ENCODE measurements at regions of chr9 and their contacts with region 1.

Region 1: GRCh38 chr9:35732122-35732799 is at the starts of genes CREB3 and TLN1:
- DNase-seq: peak; percentile 87 to 98 (median 95)
- ATAC-seq: peak; percentile 91 to 93
- H3K4me3 Mint-ChIP-seq: peak within 1 kb of the TSS in 5 of 10 donors; percentile 94 to 98 (median 95)
- H3K27ac Mint-ChIP-seq: peak within 1 kb of the TSS in 8 of 10 donors; percentile 83 to 97 (median 95)
- H3K4me1 Mint-ChIP-seq: peaks cover 19 to 30% (median 24%) of the 10 kb centered on the region in 4 donors
- H3K27me3 Mint-ChIP-seq: no peaks in the 10 kb centered on the region
- polyA plus RNA-seq, gene CREB3: 29.8 to 40.3 (median 33.1) TPM
- polyA plus RNA-seq, gene TLN1: 32.9 to 88.9 (median 36.4) TPM

Region 2: DNA sequence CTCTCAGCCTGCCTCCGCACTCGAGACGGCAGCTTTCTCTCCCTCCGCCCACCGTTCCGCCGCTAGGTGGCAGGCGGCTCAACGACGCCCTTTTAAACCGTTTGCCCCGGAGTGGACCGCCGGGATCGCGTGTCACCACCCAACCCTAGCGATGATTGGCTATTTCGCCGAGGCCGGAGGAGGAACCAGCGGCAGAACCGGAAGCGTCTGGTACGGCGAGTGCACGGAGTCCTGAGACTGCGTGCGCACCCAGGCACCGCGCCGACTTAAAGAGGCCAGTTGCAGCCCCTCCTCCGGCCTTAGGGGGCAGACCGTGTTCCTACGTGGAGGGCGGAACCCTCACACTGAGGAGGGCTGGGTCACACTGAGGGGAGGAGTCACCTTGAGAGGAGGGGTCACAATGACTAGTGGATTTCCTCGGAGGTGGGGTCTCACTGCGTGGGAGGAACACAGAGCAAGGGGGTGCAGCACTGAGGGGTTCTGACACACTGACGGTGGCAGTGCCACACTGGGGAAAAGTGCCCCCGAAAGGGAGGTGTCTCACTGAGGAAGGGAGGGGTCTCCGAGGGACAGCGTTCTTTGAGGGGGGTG is 128.2 kb before region 1 on chr9:
- POLR2A ChIA-PET with region 1: interaction called, 21 read pairs
- DNase-seq: peak; percentile 94 to 100 (median 99)
- ATAC-seq: peak; percentile 83 to 87
- H3K4me3 Mint-ChIP-seq: peak overlapping the region; percentile 92 to 99 (median 96)
- H3K27ac Mint-ChIP-seq: peak overlapping the region; percentile 93 to 99 (median 98)
- H3K4me1 Mint-ChIP-seq: peaks cover 26 to 40% (median 34%) of the 10 kb centered on the region in 4 donors
- H3K27me3 Mint-ChIP-seq: no peaks in the 10 kb centered on the region

Region 3: DNA sequence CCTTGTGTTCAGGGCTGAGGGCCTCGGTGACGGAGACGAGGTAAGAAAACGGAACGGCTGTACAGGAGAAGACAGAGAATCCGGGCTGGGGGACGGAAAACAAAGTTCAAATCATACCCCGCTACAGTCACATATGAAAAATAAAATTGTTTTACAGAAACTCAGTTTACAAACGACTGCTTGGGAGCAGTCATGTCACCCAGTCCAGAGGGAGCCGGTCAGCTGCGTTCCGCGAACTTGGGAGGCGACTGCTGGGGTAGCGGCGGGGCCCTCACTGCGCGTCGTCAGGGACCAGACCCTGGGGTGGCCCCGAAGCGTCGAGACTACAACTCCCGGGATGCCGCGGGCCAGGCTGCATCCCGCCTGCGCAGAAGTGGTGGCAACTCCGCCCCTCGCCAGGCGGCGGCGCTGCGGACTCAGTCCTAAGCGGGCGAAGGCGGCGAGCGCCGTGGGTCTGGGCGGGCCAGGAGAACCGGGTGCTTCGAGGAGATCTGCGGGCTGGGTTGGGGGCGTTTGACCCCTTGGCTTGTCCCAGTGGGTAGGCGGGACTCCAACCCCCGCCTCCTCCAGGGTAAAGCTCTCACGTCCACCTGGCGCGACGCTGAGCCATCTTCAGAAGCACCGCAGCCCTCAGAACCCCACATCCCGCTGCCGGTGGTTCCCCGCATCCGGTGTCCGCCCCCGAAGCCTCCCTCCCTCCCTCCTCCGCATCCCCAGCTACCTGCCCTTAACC is 85.6 kb before region 1 on chr9:
- POLR2A ChIA-PET with region 1: interaction called, 36 read pairs
- DNase-seq: peak; percentile 83 to 96 (median 92)
- ATAC-seq: peak; percentile 81 to 83
- H3K4me3 Mint-ChIP-seq: peak overlapping the region; percentile 89 to 98 (median 96)
- H3K27ac Mint-ChIP-seq: peak overlapping the region; percentile 95 to 98 (median 96)
- H3K4me1 Mint-ChIP-seq: peaks cover 32 to 85% (median 55%) of the 10 kb centered on the region in 4 donors
- H3K27me3 Mint-ChIP-seq: no peaks in the 10 kb centered on the region

Region 4: DNA sequence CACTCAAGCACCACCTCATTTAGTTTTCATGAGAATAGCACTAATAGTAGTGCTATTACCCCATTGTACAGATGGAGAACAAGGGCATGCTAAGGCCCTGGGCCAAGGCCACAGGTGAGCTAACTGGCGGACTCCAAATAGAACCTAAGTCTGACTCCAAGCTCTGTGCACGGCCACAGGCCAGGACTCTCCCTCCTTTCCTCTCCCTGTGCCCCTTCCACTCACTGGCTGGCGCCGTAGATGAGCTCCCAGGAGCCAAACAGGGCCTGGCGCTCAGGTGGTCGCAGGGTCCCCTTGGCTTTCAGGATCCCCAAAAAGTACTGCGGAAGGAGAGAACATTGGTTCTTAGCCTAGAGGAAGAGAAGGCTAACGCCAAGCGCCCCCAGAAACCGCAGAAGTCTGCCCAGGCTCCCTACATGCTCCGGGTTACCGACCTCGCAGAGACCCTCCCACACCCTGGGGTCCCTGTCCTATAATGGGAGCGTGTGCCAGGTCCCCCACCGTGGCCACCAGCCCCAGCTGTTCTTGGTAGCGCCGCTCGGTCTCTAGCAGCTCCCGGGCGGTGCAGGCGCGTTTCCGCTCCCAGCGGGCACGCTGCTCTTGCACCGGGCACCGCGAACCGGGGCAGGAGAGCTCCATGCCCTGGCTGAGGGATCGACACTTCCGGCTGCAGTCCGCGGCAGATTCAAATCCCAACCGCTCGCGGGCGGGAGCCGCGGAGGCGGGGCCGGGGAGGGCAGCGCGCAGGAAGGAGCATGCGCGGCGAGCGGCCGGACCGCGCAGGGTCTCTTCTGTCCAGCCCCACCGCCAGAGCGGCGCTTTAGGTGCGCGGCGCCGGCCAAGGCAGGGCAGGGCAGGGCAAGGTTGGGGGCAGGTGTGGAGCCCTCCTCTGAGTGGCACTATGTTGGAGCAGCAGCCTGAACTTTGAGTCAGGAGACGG is 67.5 kb before region 1 on chr9 and contains the start of gene ARHGEF39:
- POLR2A ChIA-PET with region 1: interaction called, 13 read pairs
- DNase-seq: peak; percentile 34 to 76 (median 58)
- ATAC-seq: peak; percentile 79 to 83
- H3K4me3 Mint-ChIP-seq: peak within 1 kb of the TSS; percentile 75 to 89 (median 84)
- H3K27ac Mint-ChIP-seq: peak within 1 kb of the TSS; percentile 57 to 99 (median 82)
- H3K4me1 Mint-ChIP-seq: peaks cover 32 to 65% (median 62%) of the 10 kb centered on the region in 4 donors
- H3K27me3 Mint-ChIP-seq: peaks cover 0 to 2% (median 0%) of the 10 kb centered on the region in 5 donors
- polyA plus RNA-seq, gene ARHGEF39: 0.13 to 0.25 (median 0.24) TPM

Region 5: DNA sequence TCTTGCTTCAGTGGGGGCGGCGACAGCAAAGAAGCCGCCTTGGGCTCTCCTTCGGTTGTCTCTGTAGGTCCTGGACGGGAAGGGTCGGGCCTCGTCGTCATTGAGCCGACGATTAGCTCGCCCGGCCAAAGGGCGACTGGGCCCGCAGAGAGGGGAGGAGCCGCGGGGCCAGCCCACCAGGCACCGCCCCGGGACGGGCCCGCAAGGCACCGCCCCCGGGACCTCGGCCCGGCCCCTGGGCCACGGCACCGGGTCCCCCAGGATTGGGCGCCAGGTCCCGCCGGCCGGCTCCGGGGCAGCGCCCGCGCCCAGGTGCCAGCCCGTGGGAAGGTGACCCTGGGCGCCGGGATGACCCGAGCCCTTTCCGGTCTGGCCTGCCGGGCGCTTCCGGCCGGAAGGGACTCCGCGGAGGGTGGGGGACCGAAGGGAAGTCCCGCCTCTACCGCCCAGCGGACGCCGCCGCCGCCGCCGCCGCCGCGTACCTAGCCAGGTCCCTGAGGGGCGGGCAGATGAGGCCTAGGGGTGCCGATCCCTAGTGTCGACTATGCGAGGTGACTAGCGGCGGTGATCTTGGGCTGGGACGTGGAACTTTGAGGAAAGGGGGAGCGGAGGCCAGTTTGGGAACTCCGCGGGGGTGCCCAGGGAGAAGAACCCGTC is 16.7 kb after region 1 on chr9 and contains the starts of genes GBA2 and RGP1:
- POLR2A ChIA-PET with region 1: interaction called, 68 read pairs
- DNase-seq: peak; percentile 24 to 74 (median 56)
- ATAC-seq: peak; percentile 79 to 84
- H3K4me3 Mint-ChIP-seq: peak within 1 kb of the TSS; percentile 90 to 99 (median 96)
- H3K27ac Mint-ChIP-seq: peak within 1 kb of the TSS; percentile 90 to 97 (median 96)
- H3K4me1 Mint-ChIP-seq: peaks cover 36 to 55% (median 49%) of the 10 kb centered on the region in 4 donors
- H3K27me3 Mint-ChIP-seq: no peaks in the 10 kb centered on the region
- polyA plus RNA-seq, gene GBA2: 14.8 to 28.3 (median 22.0) TPM
- polyA plus RNA-seq, gene RGP1: 6.8 to 9.6 (median 8.1) TPM

Region 6: DNA sequence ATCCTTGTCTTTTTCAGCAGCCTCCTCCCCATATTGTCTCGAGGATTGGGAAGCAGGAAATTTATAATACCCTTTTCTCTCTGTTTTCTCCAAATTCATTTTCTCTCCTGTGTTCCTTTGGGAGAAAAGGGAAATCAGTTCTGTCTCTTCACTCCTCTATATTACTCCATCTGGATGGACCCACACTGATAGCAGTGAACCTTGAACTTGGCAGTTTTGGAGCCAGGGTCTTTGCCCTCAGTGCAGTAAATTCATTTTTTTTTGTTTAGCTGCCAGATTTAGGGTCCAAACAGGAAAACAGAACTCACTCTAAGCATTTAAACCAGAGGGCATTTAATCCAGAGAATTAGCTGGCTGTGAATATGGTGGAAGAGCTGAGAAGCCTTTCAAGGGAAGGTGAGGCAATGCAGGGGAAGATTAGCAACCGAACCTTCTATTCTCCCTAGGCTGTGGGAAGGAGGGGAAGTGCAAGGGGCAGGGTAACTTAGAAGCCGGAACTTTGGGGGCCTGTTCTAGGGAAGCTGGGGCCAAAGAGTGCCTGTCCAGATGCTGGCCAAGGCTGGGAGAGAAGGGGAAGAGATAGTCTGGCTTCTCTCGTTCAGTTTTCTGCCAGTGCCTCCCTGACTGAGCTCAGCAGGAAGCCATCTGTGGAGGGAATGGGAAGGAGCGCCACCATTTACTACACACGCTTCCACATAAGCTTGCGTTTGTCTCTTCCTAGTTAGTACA is 42.8 kb after region 1 on chr9:
- POLR2A ChIA-PET with region 1: no interaction called
- DNase-seq: no peak
- ATAC-seq: no peak
- H3K4me3 Mint-ChIP-seq: no peak overlapping the region
- H3K27ac Mint-ChIP-seq: peak overlapping the region in 6 of 10 donors; percentile 8 to 78 (median 46)
- H3K4me1 Mint-ChIP-seq: peaks cover 0 to 15% (median 4%) of the 10 kb centered on the region in 4 donors
- H3K27me3 Mint-ChIP-seq: no peaks in the 10 kb centered on the region

Region 7: DNA sequence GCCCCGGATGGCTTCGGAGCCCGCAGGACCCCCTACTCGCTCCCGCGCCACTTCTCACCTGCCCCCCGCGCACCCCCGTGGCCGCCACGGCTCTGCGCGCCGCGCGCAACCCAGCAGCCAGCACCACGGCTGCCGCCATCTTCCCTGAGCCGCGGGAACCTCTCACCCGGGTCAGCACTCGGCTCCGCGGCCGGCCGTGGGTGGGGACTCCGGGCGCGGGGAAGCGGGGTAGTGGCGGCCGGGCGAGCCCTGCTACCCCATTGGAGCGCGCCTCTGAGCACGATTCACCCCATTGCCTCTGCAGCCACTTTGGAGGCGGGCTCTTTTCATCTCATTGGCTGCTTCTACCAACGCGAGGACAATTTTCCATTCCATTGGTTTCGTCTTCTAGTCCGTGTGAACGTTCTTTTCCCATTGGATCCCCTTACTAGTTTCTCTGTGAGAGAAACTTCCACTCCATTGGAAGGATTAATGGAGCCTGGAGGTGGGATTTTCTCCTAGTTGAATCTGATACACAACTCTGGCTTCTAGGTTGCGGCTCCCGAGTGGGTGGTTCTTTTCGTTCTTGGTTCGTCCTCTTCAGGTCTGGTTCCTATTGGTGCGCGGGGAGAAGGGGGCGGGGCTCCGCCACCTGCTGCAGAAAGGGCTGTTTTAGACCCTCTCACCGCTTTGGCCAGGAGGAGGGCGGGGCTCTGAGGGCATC is 82.7 kb after region 1 on chr9 and contains the start of gene HINT2:
- POLR2A ChIA-PET with region 1: interaction called, 28 read pairs
- DNase-seq: peak; percentile 92 to 98 (median 96)
- ATAC-seq: peak; percentile 76 to 78
- H3K4me3 Mint-ChIP-seq: peak within 1 kb of the TSS; percentile 87 to 99 (median 96)
- H3K27ac Mint-ChIP-seq: peak within 1 kb of the TSS; percentile 91 to 98 (median 96)
- H3K4me1 Mint-ChIP-seq: peaks cover 31 to 46% (median 40%) of the 10 kb centered on the region in 4 donors
- H3K27me3 Mint-ChIP-seq: peaks cover 0 to 5% (median 0%) of the 10 kb centered on the region in 5 donors
- polyA plus RNA-seq, gene HINT2: 73.0 to 87.9 (median 78.5) TPM